ENCODE measurements at regions of chr12 and their contacts with region 1.

Region 1: GRCh38 chr12:57124259-57124877 is 3.9 kb upstream of the LRP1 start:
- DNase-seq: peak; percentile 80
- H3K4me3 ChIP-seq: no peak overlapping the region; a peak in 1 of 4 replicates
- H3K27ac ChIP-seq: no peak overlapping the region
- H3K4me1 ChIP-seq: peaks cover 0 to 9% of the 10 kb centered on the region in 2 experiments; a peak in 2 of 4 replicates
- H3K27me3 ChIP-seq: no peaks in the 10 kb centered on the region
- CTCF ChIP-seq: peak; percentile 91
- EP300 ChIP-seq: no peak
- RAD21 ChIP-seq: peak; percentile 91

Region 2: DNA sequence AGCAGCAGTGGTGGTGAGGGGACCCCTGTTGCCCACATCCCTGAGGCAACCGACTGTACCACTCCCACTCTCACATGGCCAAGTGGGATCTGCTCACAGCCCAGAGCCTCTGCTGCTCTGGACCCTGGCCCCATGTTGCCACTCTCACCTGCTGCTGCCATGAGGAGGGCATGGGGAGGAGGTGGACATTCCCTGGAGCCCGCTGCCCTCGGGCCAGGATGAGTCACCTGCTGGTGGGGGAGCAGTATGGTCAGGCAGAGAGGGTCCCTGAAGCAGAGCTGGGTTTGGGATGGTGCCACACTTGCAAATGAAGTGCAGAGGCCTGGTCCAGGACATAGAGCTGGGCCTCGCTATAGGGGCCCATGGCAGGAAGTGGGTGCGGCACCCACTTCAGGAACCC is 216.2 kb before region 1 on chr12:
- CTCF ChIA-PET with region 1: no interaction called
- POLR2A ChIA-PET with region 1: no interaction called
- DNase-seq: no peak
- H3K4me3 ChIP-seq: no peak overlapping the region
- H3K27ac ChIP-seq: no peak overlapping the region
- H3K4me1 ChIP-seq: no peaks in the 10 kb centered on the region
- H3K27me3 ChIP-seq: no peaks in the 10 kb centered on the region
- CTCF ChIP-seq: no peak
- EP300 ChIP-seq: no peak
- RAD21 ChIP-seq: no peak

Region 3: GRCh38 chr12:57005980-57006808 is 118.2 kb before region 1 on chr12 and contains the start of gene ZBTB39:
- CTCF ChIA-PET with region 1: interaction called, 10 read pairs
- POLR2A ChIA-PET with region 1: no interaction called
- DNase-seq: peak; percentile 99
- H3K4me3 ChIP-seq: peak within 1 kb of the TSS; percentile 89 to 100
- H3K27ac ChIP-seq: peak within 1 kb of the TSS; percentile 34 to 69; a peak in 2 of 4 replicates
- H3K4me1 ChIP-seq: peaks cover 6 to 14% of the 10 kb centered on the region in 2 experiments; a peak in 3 of 4 replicates
- H3K27me3 ChIP-seq: no peaks in the 10 kb centered on the region
- CTCF ChIP-seq: peak; percentile 69
- EP300 ChIP-seq: no peak
- RAD21 ChIP-seq: no peak
- polyA plus RNA-seq, gene ZBTB39: 3.7 and 4.8 TPM in 2 replicates

Region 4: DNA sequence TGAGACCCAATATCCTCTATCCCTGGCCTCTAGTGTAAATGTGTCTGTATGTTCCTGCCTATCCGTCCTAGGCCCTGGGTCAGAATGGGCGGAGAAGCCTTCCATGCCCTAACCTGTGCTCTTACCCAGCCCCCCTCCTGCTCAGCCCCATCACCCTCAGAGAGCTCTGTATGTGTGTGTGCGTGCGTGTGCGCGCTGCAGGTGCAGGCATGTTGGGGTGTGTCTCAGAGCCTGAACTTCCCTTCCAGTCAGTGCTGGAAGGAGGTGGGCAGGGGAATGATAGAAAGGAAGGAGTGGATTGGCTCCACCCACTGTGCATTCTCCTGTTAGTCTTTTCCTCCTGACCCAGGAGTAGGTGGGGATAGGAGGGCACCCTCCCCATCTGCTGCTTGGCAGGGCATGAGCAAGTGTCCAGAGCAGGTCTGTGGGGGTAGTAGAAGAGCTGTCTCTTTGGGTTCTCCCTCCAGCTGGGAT is 28.2 kb before region 1 on chr12:
- CTCF ChIA-PET with region 1: interaction called, 11 read pairs
- POLR2A ChIA-PET with region 1: no interaction called
- DNase-seq: peak; percentile 10
- H3K4me3 ChIP-seq: no peak overlapping the region
- H3K27ac ChIP-seq: peak overlapping the region in 1 of 2 experiments; percentile 43; a peak in 1 of 4 replicates
- H3K4me1 ChIP-seq: peaks cover 4 to 12% of the 10 kb centered on the region in 2 experiments; a peak in 2 of 4 replicates
- H3K27me3 ChIP-seq: no peaks in the 10 kb centered on the region
- CTCF ChIP-seq: no peak
- EP300 ChIP-seq: no peak
- RAD21 ChIP-seq: no peak

Region 5: DNA sequence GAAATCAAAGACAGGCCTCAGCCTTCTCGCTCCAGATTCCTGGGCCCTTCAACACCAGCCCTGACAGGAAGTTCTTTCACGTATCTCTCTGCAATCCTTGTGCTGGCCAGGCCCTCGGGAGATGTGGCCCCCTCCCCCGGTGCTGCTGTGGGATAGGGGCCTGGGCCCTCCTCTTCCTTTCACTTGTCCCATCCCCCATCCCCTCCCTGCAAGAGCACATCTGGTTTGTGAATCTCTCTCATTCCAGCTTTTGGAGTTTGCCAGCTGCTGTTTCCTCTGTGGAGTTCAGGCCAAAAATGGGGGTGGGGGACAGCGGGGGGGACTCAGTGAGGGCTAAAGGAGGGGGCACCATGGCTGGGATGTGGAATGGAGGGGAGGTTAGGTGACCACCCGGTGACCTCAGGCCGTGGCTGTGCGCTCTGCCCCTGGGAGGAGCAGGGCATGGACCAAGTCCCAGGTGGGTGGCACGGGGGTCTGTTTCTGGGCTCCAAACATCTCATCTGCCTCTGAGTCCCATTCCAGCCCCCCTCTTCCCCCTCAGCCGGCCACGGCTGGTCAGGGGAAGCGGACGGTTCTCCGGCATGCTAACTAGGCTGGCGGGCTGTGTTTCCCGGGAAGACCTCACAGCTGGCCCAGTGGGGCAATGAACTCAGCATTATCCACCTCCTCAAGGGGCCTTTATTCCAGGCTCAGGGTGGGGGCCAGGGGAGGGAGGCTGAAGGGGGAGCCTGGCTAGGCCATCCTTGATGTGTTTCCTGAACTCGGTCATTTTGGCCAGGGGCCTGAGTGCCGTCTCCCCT is 11.4 kb after region 1 on chr12:
- CTCF ChIA-PET with region 1: interaction called, 16 read pairs
- POLR2A ChIA-PET with region 1: no interaction called
- DNase-seq: peak; percentile 78
- H3K4me3 ChIP-seq: no peak overlapping the region
- H3K27ac ChIP-seq: peak overlapping the region in 1 of 2 experiments; percentile 73; a peak in 2 of 4 replicates
- H3K4me1 ChIP-seq: peaks cover 36 to 51% of the 10 kb centered on the region in 2 experiments
- H3K27me3 ChIP-seq: no peaks in the 10 kb centered on the region
- CTCF ChIP-seq: no peak
- EP300 ChIP-seq: no peak; a peak in 1 of 4 replicates
- RAD21 ChIP-seq: no peak

Region 6: DNA sequence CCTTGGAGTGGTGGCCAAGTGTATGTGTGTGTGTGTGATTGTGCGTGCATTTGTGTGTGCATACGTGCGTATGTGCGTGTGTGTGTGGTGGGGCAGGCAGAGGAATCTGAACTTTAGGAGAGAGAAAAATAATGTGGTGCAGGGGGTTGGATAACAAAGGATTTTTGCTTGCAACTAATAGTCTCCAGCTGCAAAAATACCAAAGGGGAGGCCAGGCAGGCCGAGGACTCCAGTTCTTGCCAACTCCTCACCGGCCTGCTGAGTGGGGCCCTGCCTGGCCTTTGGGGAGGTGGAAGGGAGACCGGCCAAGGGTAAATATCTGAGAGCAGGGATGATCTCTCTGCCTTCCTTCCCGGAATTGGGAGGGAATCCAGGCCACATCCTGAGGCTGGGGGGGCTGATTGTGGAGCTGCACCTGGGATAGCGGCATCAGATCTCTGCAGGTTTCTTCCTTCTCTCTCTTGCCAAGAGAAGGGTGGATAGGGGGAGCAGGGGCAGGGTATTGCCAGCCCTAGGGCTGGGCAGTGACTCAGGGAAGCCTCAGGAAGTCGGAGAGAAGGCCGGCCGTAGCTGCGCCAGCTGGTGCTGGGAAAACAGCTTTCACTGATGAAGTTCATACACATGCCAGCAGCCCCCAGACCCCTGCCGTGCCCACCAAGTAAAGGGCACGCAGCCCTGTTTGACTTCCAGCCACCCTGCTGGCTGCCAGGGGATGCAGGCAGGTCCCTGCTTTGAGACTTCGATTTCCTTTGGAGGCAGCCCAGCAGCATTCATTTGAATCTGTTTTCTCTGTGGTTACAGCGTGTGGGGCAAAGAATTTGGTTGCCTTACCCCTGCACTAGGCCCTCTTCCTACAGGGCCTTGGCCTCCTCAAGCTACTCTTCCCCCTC is 27.6 kb after region 1 on chr12:
- CTCF ChIA-PET with region 1: interaction called, 55 read pairs
- POLR2A ChIA-PET with region 1: interaction called, 10 read pairs
- DNase-seq: peak; percentile 62
- H3K4me3 ChIP-seq: peak overlapping the region in 1 of 2 experiments; percentile 14; a peak in 1 of 4 replicates
- H3K27ac ChIP-seq: peak overlapping the region; percentile 84 to 97
- H3K4me1 ChIP-seq: peaks cover 33 to 63% of the 10 kb centered on the region in 2 experiments
- H3K27me3 ChIP-seq: no peaks in the 10 kb centered on the region
- CTCF ChIP-seq: no peak
- EP300 ChIP-seq: no peak
- RAD21 ChIP-seq: no peak

Region 7: GRCh38 chr12:57175428-57176138 is 51.2 kb after region 1 on chr12:
- CTCF ChIA-PET with region 1: interaction called, 643 read pairs
- POLR2A ChIA-PET with region 1: interaction called, 23 read pairs
- DNase-seq: peak; percentile 92
- H3K4me3 ChIP-seq: no peak overlapping the region; a peak in 1 of 4 replicates
- H3K27ac ChIP-seq: peak overlapping the region in 1 of 2 experiments; percentile 67; a peak in 2 of 4 replicates
- H3K4me1 ChIP-seq: peaks cover 0 to 16% of the 10 kb centered on the region in 2 experiments; a peak in 1 of 4 replicates
- H3K27me3 ChIP-seq: no peaks in the 10 kb centered on the region
- CTCF ChIP-seq: peak; percentile 88
- EP300 ChIP-seq: no peak
- RAD21 ChIP-seq: peak; percentile 79

Region 8: DNA sequence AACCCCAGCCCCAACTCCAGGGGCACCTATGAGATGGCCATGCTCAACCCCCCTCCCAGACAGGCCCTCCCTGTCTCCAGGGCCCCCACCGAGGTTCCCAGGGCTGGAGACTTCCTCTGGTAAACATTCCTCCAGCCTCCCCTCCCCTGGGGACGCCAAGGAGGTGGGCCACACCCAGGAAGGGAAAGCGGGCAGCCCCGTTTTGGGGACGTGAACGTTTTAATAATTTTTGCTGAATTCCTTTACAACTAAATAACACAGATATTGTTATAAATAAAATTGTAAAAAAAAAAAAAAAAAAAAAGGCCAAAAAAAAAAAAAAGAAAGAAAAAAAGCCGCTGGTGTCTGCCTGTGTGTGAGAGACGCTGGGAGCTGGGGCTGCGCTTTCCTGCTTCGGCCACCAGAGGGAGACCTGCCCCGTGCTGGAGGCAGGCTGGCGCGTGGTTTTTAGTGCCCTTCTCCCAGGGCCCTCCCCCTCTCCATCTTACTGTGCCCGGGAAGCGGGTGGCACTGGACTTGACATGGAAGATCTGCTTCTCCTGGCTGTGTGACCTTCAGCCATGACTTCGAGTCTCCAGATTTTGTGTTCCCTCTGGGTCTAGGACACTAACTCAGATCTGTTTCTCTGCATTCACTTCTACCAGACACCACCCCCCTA is 88.8 kb after region 1 on chr12:
- CTCF ChIA-PET with region 1: interaction called, 13 read pairs
- POLR2A ChIA-PET with region 1: no interaction called
- DNase-seq: peak; percentile 96
- H3K4me3 ChIP-seq: no peak overlapping the region; a peak in 1 of 4 replicates
- H3K27ac ChIP-seq: no peak overlapping the region
- H3K4me1 ChIP-seq: peaks cover 0 to 27% of the 10 kb centered on the region in 2 experiments; a peak in 1 of 4 replicates
- H3K27me3 ChIP-seq: peaks cover 14% of the 10 kb centered on the region
- CTCF ChIP-seq: peak; percentile 92
- EP300 ChIP-seq: no peak
- RAD21 ChIP-seq: peak; percentile 81